ENCODE measurements at regions of chr12 and their contacts with region 1.

Region 1: DNA sequence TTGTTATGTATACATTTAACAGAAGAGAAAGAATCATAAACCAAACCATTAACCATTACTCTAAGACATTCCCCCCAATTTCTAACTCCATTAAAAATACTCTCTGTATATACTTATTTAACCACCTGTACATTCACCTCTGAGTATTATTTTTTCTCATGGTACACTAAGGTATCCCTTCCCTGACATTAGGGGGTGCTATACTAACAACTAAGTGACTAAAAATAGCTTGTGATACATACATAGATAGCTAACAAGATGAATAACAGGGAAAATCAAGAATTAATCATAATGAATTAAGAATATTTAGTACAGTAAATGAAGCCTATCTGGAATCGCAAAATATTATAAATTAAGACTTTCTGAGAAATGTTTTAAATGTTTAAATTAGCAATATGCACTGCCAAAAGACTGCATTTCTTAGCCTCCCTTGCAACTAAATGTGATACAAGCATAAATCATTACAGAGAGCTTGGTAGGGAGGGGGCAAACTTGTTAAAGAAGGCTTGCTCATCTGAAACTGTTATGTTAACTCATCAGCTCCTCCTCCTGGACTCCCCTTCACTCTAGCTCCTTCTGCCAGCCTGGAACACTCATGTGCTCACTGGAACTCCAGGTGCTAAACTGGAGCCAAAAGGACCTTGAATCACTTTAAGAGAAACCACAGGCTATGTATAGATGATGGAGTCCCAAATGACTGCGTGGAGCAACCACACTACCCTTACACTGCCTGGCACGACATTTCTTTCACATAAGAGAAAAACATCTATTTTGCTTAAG is 14.9 kb downstream of the C2CD5 start:
- DNase-seq: peak; percentile 57
- ATAC-seq: peak; percentile 61
- H3K4me3 ChIP-seq: no peak overlapping the region
- H3K4me3 Mint-ChIP-seq: no peak overlapping the region
- H3K27ac ChIP-seq: no peak overlapping the region
- H3K27ac Mint-ChIP-seq: no peak overlapping the region
- H3K4me1 ChIP-seq: no peaks in the 10 kb centered on the region
- H3K4me1 Mint-ChIP-seq: peaks cover under 1% of the 10 kb centered on the region
- H3K27me3 ChIP-seq: no peaks in the 10 kb centered on the region
- H3K27me3 Mint-ChIP-seq: no peaks in the 10 kb centered on the region
- CTCF ChIP-seq: peak; percentile 74

Region 2: GRCh38 chr12:22624870-22625761 is 95.6 kb after region 1 on chr12 and contains the start of gene ETNK1:
- CTCF ChIA-PET with region 1: interaction called, 53 read pairs
- POLR2A ChIA-PET with region 1: no interaction called
- intact Hi-C with region 1: no loop called
- DNase-seq: peak; percentile 88
- ATAC-seq: peak; percentile 99
- H3K4me3 ChIP-seq: peak within 1 kb of the TSS; percentile 75 to 97 (median 90)
- H3K4me3 Mint-ChIP-seq: peak within 1 kb of the TSS; percentile 100
- H3K27ac ChIP-seq: peak within 1 kb of the TSS; percentile 87 to 97
- H3K27ac Mint-ChIP-seq: peak within 1 kb of the TSS; percentile 96
- H3K4me1 ChIP-seq: peaks cover 14 to 36% of the 10 kb centered on the region in 2 donors
- H3K4me1 Mint-ChIP-seq: peaks cover 43% of the 10 kb centered on the region
- H3K27me3 ChIP-seq: peaks cover 0 to 6% (median 0%) of the 10 kb centered on the region in 4 experiments
- H3K27me3 Mint-ChIP-seq: peaks cover 10% of the 10 kb centered on the region
- CTCF ChIP-seq: no peak
- total RNA-seq, gene ETNK1: 91.8 and 106 TPM in 2 replicates

Region 3: GRCh38 chr12:22631863-22632463 is 102.5 kb after region 1 on chr12:
- CTCF ChIA-PET with region 1: interaction called, 53 read pairs
- POLR2A ChIA-PET with region 1: no interaction called
- intact Hi-C with region 1: loop called (anchors 1 kb)
- DNase-seq: peak; percentile 46
- ATAC-seq: peak; percentile 39
- H3K4me3 ChIP-seq: no peak overlapping the region
- H3K4me3 Mint-ChIP-seq: no peak overlapping the region
- H3K27ac ChIP-seq: peak overlapping the region in 1 of 2 donors; percentile 38
- H3K27ac Mint-ChIP-seq: no peak overlapping the region
- H3K4me1 ChIP-seq: peaks cover 8 to 30% of the 10 kb centered on the region in 2 donors
- H3K4me1 Mint-ChIP-seq: peaks cover 55% of the 10 kb centered on the region
- H3K27me3 ChIP-seq: no peaks in the 10 kb centered on the region
- H3K27me3 Mint-ChIP-seq: no peaks in the 10 kb centered on the region
- CTCF ChIP-seq: peak; percentile 92

Region 4: GRCh38 chr12:22670762-22671161 is 141.3 kb after region 1 on chr12:
- CTCF ChIA-PET with region 1: interaction called, 17 read pairs
- POLR2A ChIA-PET with region 1: no interaction called
- intact Hi-C with region 1: loop called (anchors 1 kb)
- DNase-seq: no peak
- ATAC-seq: no peak
- H3K4me3 ChIP-seq: no peak overlapping the region
- H3K4me3 Mint-ChIP-seq: no peak overlapping the region
- H3K27ac ChIP-seq: no peak overlapping the region
- H3K27ac Mint-ChIP-seq: no peak overlapping the region
- H3K4me1 ChIP-seq: no peaks in the 10 kb centered on the region
- H3K4me1 Mint-ChIP-seq: no peaks in the 10 kb centered on the region
- H3K27me3 ChIP-seq: no peaks in the 10 kb centered on the region
- H3K27me3 Mint-ChIP-seq: no peaks in the 10 kb centered on the region
- CTCF ChIP-seq: peak; percentile 30

Measured in B cell (primary cell).